ENCODE measurements at regions of chr2 and their contacts with region 1.

Region 1: DNA sequence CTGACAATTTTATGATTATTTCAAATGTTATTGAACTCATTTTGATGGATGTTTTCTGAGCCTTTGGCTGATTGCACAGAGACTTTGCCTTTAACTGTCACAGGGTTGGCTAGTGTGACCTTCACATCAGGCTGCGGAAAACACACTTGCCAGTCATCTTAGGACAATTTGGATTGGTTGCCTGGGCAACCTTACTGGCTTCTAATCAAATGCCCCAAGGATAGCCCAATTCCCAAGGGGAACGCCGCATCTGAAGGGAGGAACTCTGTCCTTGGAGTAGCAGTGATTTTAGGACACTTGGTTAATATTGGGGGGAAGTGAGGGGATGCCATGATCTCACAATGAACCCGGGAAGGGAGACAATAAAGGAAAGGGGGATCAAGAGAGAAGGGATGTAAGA is 29.5 kb downstream of the OSBPL6 start:
- DNase-seq: no peak
- ATAC-seq: no peak
- H3K4me3 ChIP-seq: no peak overlapping the region
- H3K27ac ChIP-seq: no peak overlapping the region
- H3K4me1 ChIP-seq: no peaks in the 10 kb centered on the region
- H3K27me3 ChIP-seq: peaks cover 0 to 2% of the 10 kb centered on the region in 2 experiments; a peak in 3 of 4 replicates
- CTCF ChIP-seq: no peak
- EP300 ChIP-seq: no peak
- POLR2A ChIP-seq: no peak
- RAD21 ChIP-seq: no peak

Region 2: GRCh38 chr2:178241844-178242551 is 18.2 kb after region 1 on chr2:
- CTCF ChIA-PET with region 1: no interaction called
- POLR2A ChIA-PET with region 1: no interaction called
- RAD21 ChIA-PET with region 1: no interaction called
- SMC1A ChIA-PET with region 1: no interaction called
- in situ Hi-C with region 1: no loop called
- intact Hi-C with region 1: loop called (anchors 2 kb)
- DNase-seq: no peak
- ATAC-seq: no peak
- H3K4me3 ChIP-seq: no peak overlapping the region
- H3K27ac ChIP-seq: no peak overlapping the region
- H3K4me1 ChIP-seq: no peaks in the 10 kb centered on the region
- H3K27me3 ChIP-seq: no peaks in the 10 kb centered on the region
- CTCF ChIP-seq: no peak
- EP300 ChIP-seq: no peak
- POLR2A ChIP-seq: no peak
- RAD21 ChIP-seq: no peak

Measured in GM12878 (cell line).